IMR-90 (cell line): ENCODE measurements at regions of chr4 and their contacts with region 1.

Region 1: GRCh38 chr4:87166296-87166854 is 54.0 kb downstream of the KLHL8 start:
- DNase-seq: no peak
- ATAC-seq: no peak
- H3K4me3 ChIP-seq: no peak overlapping the region
- H3K27ac ChIP-seq: no peak overlapping the region
- H3K4me1 ChIP-seq: peaks cover 2% of the 10 kb centered on the region; the same call in 1 of the 2 replicates
- H3K27me3 ChIP-seq: no peaks in the 10 kb centered on the region
- CTCF ChIP-seq: no peak
- POLR2A ChIP-seq: no peak
- RAD21 ChIP-seq: no peak

Region 2: GRCh38 chr4:86564795-86565194 is 601.6 kb before region 1 on chr4:
- CTCF ChIA-PET with region 1: no interaction called
- POLR2A ChIA-PET with region 1: no interaction called
- dilution Hi-C with region 1: no loop called
- in situ Hi-C with region 1: no loop called
- intact Hi-C with region 1: no loop called
- DNase-seq: no peak
- ATAC-seq: no peak
- H3K4me3 ChIP-seq: no peak overlapping the region
- H3K27ac ChIP-seq: no peak overlapping the region
- H3K4me1 ChIP-seq: no peaks in the 10 kb centered on the region
- H3K27me3 ChIP-seq: no peaks in the 10 kb centered on the region
- CTCF ChIP-seq: no peak
- POLR2A ChIP-seq: no peak
- RAD21 ChIP-seq: no peak

Region 3: GRCh38 chr4:86579941-86580340 is 586.4 kb before region 1 on chr4:
- CTCF ChIA-PET with region 1: no interaction called
- POLR2A ChIA-PET with region 1: no interaction called
- dilution Hi-C with region 1: no loop called
- in situ Hi-C with region 1: no loop called
- intact Hi-C with region 1: no loop called
- DNase-seq: no peak
- ATAC-seq: no peak
- H3K4me3 ChIP-seq: no peak overlapping the region
- H3K27ac ChIP-seq: no peak overlapping the region
- H3K4me1 ChIP-seq: no peaks in the 10 kb centered on the region
- H3K27me3 ChIP-seq: no peaks in the 10 kb centered on the region
- CTCF ChIP-seq: no peak
- POLR2A ChIP-seq: no peak
- RAD21 ChIP-seq: no peak

Region 4: GRCh38 chr4:87038837-87039615 is 127.3 kb before region 1 on chr4:
- CTCF ChIA-PET with region 1: no interaction called
- POLR2A ChIA-PET with region 1: no interaction called
- dilution Hi-C with region 1: no loop called
- in situ Hi-C with region 1: no loop called
- intact Hi-C with region 1: no loop called
- DNase-seq: peak; percentile 91
- ATAC-seq: peak; percentile 92
- H3K4me3 ChIP-seq: no peak overlapping the region
- H3K27ac ChIP-seq: peak overlapping the region; percentile 1; the same call in 1 of the 2 replicates
- H3K4me1 ChIP-seq: peaks cover 20% of the 10 kb centered on the region
- H3K27me3 ChIP-seq: no peaks in the 10 kb centered on the region
- CTCF ChIP-seq: no peak
- POLR2A ChIP-seq: no peak
- RAD21 ChIP-seq: no peak

Region 5: GRCh38 chr4:87451537-87451936 is 285.2 kb after region 1 on chr4:
- CTCF ChIA-PET with region 1: no interaction called
- POLR2A ChIA-PET with region 1: no interaction called
- dilution Hi-C with region 1: no loop called
- in situ Hi-C with region 1: loop called (anchors 10 kb)
- intact Hi-C with region 1: no loop called
- DNase-seq: no peak
- ATAC-seq: no peak
- H3K4me3 ChIP-seq: no peak overlapping the region
- H3K27ac ChIP-seq: no peak overlapping the region
- H3K4me1 ChIP-seq: no peaks in the 10 kb centered on the region
- H3K27me3 ChIP-seq: no peaks in the 10 kb centered on the region
- CTCF ChIP-seq: no peak
- POLR2A ChIP-seq: no peak
- RAD21 ChIP-seq: no peak